RWPE1 (cell line): ENCODE measurements at regions of chr22 and their contacts with region 1.

Region 1: DNA sequence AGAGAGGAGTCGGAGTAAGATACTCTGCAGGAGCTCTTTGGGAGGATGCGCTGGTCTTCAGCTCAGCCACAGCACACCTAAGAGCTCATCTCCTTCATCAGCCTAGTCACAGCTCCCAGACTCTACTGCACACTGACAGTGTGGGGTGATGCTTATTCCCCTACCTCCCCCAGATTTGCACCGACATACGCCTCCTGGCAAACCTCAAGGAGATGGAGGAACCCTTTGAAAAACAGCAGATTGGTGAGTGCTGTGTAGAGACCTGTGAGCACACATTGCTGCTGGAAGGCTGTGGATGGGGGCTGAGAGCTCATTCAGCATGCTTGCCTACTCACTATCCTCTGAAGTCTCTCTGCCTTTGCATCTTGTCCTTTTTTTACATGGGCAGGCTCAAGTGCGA is 9.3 kb upstream of the SGSM3 start:
- DNase-seq: no peak
- H3K27ac ChIP-seq: no peak overlapping the region
- CTCF ChIP-seq: no peak

Region 2: DNA sequence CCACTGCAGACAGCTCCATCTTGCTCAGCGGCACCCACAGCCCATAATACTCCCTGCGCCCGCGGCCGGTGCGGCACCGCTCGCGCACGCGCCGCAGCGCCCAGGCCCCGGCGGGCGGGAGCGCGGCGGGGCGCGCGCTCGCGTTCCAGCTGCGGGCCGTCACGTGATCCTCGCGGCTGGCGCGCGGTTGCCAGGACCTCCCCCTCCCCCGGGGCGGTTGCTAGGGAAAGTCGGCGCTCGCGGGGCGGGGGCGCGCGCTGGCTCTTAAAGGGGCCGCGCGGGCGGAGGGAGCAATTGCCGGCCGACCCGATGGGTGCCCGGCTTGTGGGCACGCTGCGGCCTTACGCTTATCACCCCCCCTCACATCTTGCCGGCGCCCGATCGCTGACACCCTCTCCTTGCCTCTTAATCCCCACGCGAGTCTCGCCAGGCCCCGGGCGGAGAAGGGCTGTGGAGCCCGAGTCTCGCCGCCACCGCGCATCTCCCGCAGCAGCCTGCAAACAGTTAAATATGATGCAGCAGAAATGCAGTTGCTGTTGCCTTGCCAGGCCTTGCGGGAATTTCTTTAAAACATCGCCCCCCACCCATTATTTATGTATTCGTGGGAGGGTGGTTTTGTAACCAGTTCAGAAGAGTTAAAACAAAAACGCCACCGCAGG is 1488.8 kb before region 1 on chr22 and contains the start of gene CBX6:
- CTCF ChIA-PET with region 1: no interaction called
- POLR2A ChIA-PET with region 1: no interaction called
- DNase-seq: peak; percentile 90
- H3K27ac ChIP-seq: peak within 1 kb of the TSS; percentile 79
- CTCF ChIP-seq: no peak

Region 3: DNA sequence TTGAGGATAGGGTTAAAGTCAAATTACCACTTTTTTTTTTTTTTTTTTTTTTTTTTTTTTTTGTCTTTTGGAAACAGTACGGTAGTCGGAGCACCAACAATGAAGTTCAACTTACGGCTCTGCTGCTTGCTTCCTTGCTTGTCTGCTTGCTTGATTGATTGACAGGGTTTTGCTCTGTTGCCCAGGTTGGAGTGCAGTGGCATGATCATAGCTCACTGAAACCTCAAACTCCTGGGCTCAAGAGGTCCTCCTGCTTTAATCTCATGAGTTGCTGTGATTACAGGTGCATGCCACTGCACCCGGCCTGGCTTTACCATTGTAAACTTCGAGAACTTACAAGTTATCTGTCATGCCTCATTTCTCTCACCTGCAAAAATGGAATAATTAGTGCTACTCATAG is 15.0 kb after region 1 on chr22:
- CTCF ChIA-PET with region 1: interaction called, 10 read pairs
- POLR2A ChIA-PET with region 1: no interaction called
- DNase-seq: no peak
- H3K27ac ChIP-seq: no peak overlapping the region
- CTCF ChIP-seq: no peak